Sigmoid colon (tissue), 7 donors: ENCODE measurements at regions of chr10 and their contacts with region 1.

Region 1: DNA sequence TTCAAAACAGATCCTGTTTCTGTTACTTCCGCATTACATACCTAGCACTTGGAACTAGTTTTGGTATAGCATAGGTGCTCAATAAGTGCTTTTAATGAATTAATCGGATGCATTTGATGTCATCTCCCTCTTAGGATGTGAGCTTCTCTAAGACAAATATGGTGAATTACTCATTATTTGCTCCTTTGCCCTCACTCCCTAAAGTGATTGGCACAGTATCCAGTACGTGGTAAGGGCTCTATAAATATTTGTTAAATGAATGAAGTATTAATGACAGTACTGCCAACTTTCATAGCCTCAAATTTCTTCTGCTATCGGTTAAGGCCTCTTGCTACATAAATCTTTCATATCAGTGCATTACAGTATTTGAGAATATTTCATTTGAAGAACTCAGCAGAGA is 75.9 kb upstream of the ARID5B start:
- DNase-seq: no peak
- H3K4me3 ChIP-seq: no peak overlapping the region
- H3K27ac ChIP-seq: no peak overlapping the region
- H3K4me1 ChIP-seq: no peaks in the 10 kb centered on the region
- H3K27me3 ChIP-seq: no peaks in the 10 kb centered on the region
- CTCF ChIP-seq: no peak
- EP300 ChIP-seq: no peak
- POLR2A ChIP-seq: no peak

Region 2: DNA sequence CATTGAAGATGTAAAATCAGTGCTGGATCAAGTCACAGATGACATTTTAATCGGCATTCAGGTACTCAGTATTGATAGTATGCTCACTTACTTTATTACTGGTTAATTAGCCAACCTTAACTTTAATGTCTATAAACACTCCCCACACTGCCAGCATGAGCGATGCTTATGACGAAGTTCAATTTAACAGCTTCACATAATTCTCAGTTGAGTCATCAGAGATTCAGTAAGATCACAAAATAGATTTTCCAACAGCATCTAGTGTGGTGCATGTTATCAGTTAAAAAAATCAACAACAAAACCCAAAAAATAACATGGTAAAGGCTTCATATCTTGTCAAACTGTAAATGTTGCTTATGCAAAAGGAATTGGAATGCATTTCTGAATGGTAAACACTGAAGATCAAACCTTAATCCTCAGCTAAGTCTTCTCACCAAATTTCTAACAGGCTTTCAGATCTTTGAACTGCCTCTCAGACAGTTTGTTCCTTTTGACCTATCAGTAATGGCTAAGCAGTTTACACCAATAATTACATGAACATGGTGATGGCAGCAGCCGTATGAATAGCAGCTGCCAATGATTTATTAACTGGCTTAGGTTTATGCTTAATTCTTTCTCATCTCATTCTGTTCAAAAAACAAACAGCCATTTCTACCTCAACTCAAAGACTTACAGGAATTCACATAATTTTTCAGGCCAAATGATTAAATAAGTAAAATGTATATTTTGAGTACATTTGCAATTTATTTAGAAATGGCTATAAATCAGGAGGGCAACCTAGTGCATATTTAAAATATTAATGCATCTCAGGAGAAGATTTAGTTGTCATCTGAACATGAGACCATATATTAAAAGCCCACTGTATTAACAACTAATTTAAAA is 64.4 kb before region 1 on chr10:
- intact Hi-C with region 1: no loop called
- DNase-seq: no peak
- H3K4me3 ChIP-seq: no peak overlapping the region
- H3K27ac ChIP-seq: peak overlapping the region in 3 of 4 donors; percentile 18 to 52 (median 44)
- H3K4me1 ChIP-seq: peaks cover 0 to 12% (median 8%) of the 10 kb centered on the region in 4 donors
- H3K27me3 ChIP-seq: no peaks in the 10 kb centered on the region
- CTCF ChIP-seq: no peak
- EP300 ChIP-seq: no peak
- POLR2A ChIP-seq: no peak

Region 3: DNA sequence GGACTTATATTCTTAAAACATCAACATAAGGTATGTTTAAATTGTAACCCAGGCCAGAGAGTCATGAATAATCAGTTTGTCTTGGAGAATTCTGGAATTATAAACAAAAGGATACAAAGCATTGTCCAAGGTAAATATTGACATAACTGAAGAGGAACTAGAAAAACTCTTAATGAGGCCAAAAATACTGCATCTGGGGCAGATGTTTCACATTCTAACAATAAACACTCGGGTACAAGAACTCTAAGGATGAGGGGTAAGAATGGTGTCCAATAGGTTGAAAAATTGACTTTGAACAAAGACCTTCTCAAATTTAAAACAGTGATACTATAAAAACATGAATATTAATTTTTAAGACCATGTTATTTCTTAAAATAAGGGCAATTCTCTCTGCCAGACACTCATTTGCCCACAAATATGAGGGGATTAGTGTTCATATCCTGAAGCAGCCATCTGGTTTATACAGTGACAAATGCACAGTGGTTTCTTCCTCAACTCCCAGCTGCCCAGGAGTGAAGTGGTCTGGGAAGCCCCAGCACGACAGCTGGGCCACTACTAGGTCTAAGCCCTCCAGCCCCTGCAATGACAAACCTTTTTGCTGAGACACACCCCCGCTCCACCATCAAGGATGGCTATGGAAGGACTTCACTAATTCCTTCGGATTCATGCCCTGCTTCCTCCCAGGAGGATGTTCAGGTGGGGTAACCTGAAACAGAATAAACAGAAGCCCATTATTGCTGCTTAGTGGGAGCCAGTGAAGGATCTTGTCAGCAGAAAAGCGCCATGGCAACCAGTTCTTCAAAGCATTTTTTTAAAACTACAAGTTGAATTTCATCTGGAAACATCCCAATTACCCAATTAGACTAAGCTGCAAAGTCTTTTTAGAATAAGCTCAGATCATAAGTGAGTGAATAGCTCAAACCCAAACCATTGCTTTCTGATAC is 31.6 kb before region 1 on chr10:
- intact Hi-C with region 1: loop called (anchors 5 kb)
- DNase-seq: no peak
- H3K4me3 ChIP-seq: no peak overlapping the region
- H3K27ac ChIP-seq: peak overlapping the region in 1 of 4 donors; percentile 58
- H3K4me1 ChIP-seq: peaks cover 0 to 27% (median 20%) of the 10 kb centered on the region in 4 donors
- H3K27me3 ChIP-seq: no peaks in the 10 kb centered on the region
- CTCF ChIP-seq: no peak
- EP300 ChIP-seq: no peak
- POLR2A ChIP-seq: no peak

Region 4: DNA sequence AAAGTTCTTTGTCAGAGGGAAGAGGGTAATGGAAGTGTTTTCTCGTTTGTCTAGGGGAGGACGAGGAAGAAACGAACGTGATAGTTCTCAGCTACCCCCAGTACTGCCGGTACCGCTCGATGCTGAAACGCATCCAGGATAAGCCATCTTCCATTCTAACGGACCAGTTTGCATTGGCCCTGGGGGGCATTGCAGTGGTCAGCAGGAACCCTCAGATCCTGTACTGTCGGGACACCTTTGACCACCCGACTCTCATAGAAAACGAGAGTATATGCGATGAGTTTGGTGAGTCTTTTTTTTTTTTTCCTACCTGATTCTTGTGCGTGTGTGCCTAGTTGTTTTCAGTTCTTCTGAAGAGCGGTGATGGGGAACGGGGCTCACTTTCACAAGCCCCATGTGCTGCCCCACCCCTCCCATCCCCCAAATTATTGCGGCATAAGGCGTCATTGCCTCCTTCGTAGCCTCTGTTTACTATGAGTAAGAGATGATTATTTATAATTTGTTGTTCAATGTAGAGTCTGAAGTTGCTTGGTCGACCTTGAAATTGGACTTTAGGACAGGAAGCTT is 174.5 kb after region 1 on chr10:
- intact Hi-C with region 1: no loop called
- DNase-seq: no peak
- H3K4me3 ChIP-seq: no peak overlapping the region
- H3K27ac ChIP-seq: no peak overlapping the region
- H3K4me1 ChIP-seq: peaks cover 0 to 28% (median 17%) of the 10 kb centered on the region in 4 donors
- H3K27me3 ChIP-seq: no peaks in the 10 kb centered on the region
- CTCF ChIP-seq: no peak
- EP300 ChIP-seq: no peak
- POLR2A ChIP-seq: no peak